Dorsolateral prefrontal cortex (tissue), 120 donors: ENCODE measurements at regions of chr1 and their contacts with region 1.

Region 1: GRCh38 chr1:110407260-110408210 is at the start of gene LAMTOR5:
- DNase-seq: peak; percentile 87 to 95 (median 92)
- H3K4me3 ChIP-seq: peak within 1 kb of the TSS; percentile 72 to 100 (median 93)
- H3K27ac ChIP-seq: peak within 1 kb of the TSS; percentile 74 to 99 (median 93)
- H3K27me3 ChIP-seq: no peaks in the 10 kb centered on the region
- CTCF ChIP-seq: peak in 48 of 56 donors; percentile 5 to 63 (median 38)
- total RNA-seq, gene LAMTOR5: 68.7 to 146 (median 106) TPM

Region 2: GRCh38 chr1:110034451-110035235 is 372.9 kb before region 1 on chr1 and contains the start of gene STRIP1:
- intact Hi-C with region 1: loop called in 1 of 2 experiments (anchors 10 kb)
- DNase-seq: peak; percentile 76 to 92 (median 88)
- H3K4me3 ChIP-seq: peak within 1 kb of the TSS; percentile 73 to 100 (median 95)
- H3K27ac ChIP-seq: peak within 1 kb of the TSS; percentile 36 to 97 (median 88)
- H3K27me3 ChIP-seq: no peaks in the 10 kb centered on the region
- CTCF ChIP-seq: peak in 43 of 56 donors; percentile 4 to 64 (median 29)
- total RNA-seq, gene STRIP1: 45.9 to 78.9 (median 61.2) TPM

Region 3: GRCh38 chr1:110136911-110137310 is 270.6 kb before region 1 on chr1:
- intact Hi-C with region 1: no loop called
- DNase-seq: peak; percentile 64 to 98 (median 88)
- H3K4me3 ChIP-seq: peak overlapping the region in 6 of 59 donors; percentile 4 to 27 (median 18)
- H3K27ac ChIP-seq: peak overlapping the region in 57 of 59 donors; percentile 1 to 91 (median 82)
- H3K27me3 ChIP-seq: peaks cover 0 to 22% (median 0%) of the 10 kb centered on the region in 45 donors
- CTCF ChIP-seq: no peak

Region 4: GRCh38 chr1:110338886-110339406 is 68.6 kb before region 1 on chr1 and contains the start of gene RBM15:
- intact Hi-C with region 1: loop called (anchors 1 kb)
- DNase-seq: peak; percentile 95 to 100 (median 99)
- H3K4me3 ChIP-seq: peak within 1 kb of the TSS; percentile 73 to 100 (median 94)
- H3K27ac ChIP-seq: peak within 1 kb of the TSS; percentile 84 to 100 (median 97)
- H3K27me3 ChIP-seq: no peaks in the 10 kb centered on the region
- CTCF ChIP-seq: no peak
- total RNA-seq, gene RBM15: 17.5 to 31.2 (median 23.8) TPM